ENCODE measurements at regions of chr19 and their contacts with region 1.

Region 1: DNA sequence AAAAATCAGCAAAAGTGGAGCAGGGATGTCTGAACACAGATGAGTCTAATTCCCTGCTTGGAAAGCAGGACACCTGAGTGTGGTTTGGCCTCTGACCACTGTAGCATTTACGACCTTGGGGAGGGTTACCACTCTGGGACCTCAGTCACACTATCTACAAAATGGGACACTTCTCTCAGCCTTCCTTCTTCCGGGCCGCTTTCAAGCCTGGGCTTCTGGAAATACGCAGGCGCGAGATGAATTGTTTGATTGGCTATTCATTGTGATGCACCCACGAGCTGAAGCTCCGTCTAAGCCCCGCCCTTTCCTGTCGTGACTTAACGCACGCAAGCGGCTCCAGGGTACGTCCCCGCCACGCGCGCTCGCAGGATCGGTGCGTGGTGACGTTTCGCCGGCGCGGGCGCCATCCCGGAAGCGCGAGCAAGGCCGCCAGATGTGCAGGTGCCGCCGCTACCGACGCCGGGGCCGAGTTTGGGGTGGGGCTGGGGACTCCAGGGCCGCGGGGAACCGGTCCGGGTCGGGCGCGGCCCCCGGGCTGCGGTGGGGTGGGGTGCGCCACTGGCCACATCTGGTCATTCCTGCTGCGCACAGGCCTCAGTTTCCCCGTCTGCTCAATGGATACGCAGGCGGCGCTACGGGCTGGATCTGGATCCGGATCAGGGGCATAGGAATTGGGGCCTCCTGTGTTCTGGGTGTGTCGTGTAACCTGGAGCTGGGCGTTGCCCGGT is at the start of gene KXD1:
- DNase-seq: peak; percentile 93
- ATAC-seq: peak; percentile 99
- H3K4me3 Mint-ChIP-seq: peak within 1 kb of the TSS; percentile 87
- H3K27ac Mint-ChIP-seq: peak within 1 kb of the TSS; percentile 89
- H3K4me1 Mint-ChIP-seq: peaks cover 25% of the 10 kb centered on the region
- H3K27me3 Mint-ChIP-seq: no peaks in the 10 kb centered on the region
- CTCF ChIP-seq: no peak
- total RNA-seq, gene KXD1: 82.2 and 88.8 TPM in 2 replicates

Region 2: DNA sequence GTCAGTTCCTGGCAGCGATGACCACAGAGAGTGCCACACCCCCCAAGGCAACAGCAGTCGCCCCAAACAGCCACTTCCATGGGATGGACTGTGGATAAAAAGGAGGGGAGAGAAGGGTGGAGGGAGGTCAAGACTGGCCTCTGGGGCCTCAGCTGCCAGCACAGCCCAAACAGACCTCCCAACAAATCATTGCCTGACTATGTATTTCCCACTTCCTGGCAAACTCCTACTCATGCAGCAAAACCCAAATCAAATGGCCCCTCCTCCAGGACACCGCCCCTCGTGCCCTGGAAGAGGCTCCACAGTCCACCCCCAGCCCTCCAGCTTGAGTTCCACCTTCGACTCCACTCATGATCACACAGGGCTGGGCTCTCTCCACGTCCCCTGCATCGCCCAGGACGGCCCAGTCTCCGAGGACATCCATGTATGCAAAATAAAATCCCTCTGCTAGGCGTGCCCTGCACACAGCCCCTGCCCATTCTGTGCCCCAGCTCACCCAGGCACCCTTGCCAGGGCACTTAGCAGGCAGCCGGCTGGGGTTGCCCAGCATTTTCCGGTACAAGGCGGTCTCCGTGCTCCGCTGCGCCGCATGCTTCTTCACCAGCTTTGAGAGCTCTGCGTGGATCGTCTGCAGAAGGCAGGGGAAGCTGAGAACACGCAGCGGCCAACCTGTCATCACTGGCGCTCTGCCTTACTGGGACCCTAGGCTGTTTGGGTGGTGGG is 25.3 kb before region 1 on chr19:
- CTCF ChIA-PET with region 1: no interaction called
- POLR2A ChIA-PET with region 1: interaction called, 10 read pairs
- intact Hi-C with region 1: no loop called
- DNase-seq: no peak
- ATAC-seq: no peak
- H3K4me3 Mint-ChIP-seq: no peak overlapping the region
- H3K27ac Mint-ChIP-seq: no peak overlapping the region
- H3K4me1 Mint-ChIP-seq: no peaks in the 10 kb centered on the region
- H3K27me3 Mint-ChIP-seq: no peaks in the 10 kb centered on the region
- CTCF ChIP-seq: no peak

Region 3: DNA sequence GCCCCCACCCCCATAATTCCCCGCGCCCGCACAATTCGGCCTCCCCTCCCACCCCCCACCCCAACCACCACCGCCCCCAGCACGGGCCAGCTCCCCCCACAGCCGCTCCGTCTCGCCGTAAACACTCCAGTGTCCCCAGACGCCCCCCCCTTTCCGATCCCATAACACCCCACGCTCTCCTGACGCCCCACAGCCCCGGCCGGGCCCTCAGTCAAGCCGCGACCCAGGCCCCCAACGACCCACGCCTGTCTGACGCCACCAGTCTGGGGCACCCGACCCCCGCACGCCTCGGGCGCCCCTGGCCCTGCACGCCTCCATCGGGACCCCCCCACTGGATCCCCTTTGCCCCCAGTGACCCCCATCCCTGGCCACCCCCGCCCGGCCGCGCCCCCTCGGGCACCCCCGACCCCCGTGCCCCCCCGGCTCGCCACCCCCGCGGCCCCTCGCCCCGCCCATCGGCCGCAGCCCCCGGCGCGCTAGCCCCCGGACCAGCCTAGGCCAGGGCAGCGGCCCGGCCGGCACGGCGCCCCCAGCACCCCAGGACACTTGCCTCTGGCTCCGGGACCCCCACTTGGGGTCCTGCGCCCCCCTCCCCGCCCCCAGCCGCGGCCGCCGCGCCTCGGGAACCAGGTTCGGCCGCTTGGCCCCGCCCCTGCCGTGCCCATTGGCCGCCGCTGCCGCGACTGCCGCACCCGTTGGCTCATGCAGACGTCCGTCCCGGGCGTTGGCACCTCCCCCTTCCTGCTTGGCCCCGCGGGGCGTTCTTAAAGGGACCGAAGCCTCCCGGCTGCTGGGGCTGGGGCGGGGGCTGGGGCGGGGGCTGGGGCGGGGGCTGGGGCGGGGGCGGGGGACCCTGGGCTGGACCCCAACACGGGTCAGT is 14.5 kb before region 1 on chr19 and contains the start of gene FKBP8:
- CTCF ChIA-PET with region 1: no interaction called
- POLR2A ChIA-PET with region 1: interaction called, 47 read pairs
- intact Hi-C with region 1: loop called (anchors 1 kb)
- DNase-seq: peak; percentile 92
- ATAC-seq: peak; percentile 99
- H3K4me3 Mint-ChIP-seq: peak within 1 kb of the TSS; percentile 90
- H3K27ac Mint-ChIP-seq: peak within 1 kb of the TSS; percentile 90
- H3K4me1 Mint-ChIP-seq: peaks cover 23% of the 10 kb centered on the region
- H3K27me3 Mint-ChIP-seq: no peaks in the 10 kb centered on the region
- CTCF ChIP-seq: no peak
- total RNA-seq, gene FKBP8: 133 and 140 TPM in 2 replicates

Region 4: GRCh38 chr19:18571564-18572300 is 14.1 kb after region 1 on chr19 and contains the start of gene UBA52:
- CTCF ChIA-PET with region 1: interaction called, 3 read pairs
- POLR2A ChIA-PET with region 1: interaction called, 88 read pairs
- intact Hi-C with region 1: loop called (anchors 1 kb)
- DNase-seq: peak; percentile 100
- ATAC-seq: peak; percentile 93
- H3K4me3 Mint-ChIP-seq: peak within 1 kb of the TSS; percentile 94
- H3K27ac Mint-ChIP-seq: peak within 1 kb of the TSS; percentile 93
- H3K4me1 Mint-ChIP-seq: peaks cover 30% of the 10 kb centered on the region
- H3K27me3 Mint-ChIP-seq: no peaks in the 10 kb centered on the region
- CTCF ChIP-seq: no peak
- total RNA-seq, gene UBA52: 1,962 and 2,164 TPM in 2 replicates

Region 5: GRCh38 chr19:18603255-18603957 is 45.8 kb after region 1 on chr19:
- CTCF ChIA-PET with region 1: no interaction called
- POLR2A ChIA-PET with region 1: no interaction called
- intact Hi-C with region 1: no loop called
- DNase-seq: no peak
- ATAC-seq: peak; percentile 51
- H3K4me3 Mint-ChIP-seq: no peak overlapping the region
- H3K27ac Mint-ChIP-seq: no peak overlapping the region
- H3K4me1 Mint-ChIP-seq: peaks cover 17% of the 10 kb centered on the region
- H3K27me3 Mint-ChIP-seq: peaks cover 41% of the 10 kb centered on the region
- CTCF ChIP-seq: no peak